ENCODE measurements at regions of chr14 and their contacts with region 1.

Region 1: DNA sequence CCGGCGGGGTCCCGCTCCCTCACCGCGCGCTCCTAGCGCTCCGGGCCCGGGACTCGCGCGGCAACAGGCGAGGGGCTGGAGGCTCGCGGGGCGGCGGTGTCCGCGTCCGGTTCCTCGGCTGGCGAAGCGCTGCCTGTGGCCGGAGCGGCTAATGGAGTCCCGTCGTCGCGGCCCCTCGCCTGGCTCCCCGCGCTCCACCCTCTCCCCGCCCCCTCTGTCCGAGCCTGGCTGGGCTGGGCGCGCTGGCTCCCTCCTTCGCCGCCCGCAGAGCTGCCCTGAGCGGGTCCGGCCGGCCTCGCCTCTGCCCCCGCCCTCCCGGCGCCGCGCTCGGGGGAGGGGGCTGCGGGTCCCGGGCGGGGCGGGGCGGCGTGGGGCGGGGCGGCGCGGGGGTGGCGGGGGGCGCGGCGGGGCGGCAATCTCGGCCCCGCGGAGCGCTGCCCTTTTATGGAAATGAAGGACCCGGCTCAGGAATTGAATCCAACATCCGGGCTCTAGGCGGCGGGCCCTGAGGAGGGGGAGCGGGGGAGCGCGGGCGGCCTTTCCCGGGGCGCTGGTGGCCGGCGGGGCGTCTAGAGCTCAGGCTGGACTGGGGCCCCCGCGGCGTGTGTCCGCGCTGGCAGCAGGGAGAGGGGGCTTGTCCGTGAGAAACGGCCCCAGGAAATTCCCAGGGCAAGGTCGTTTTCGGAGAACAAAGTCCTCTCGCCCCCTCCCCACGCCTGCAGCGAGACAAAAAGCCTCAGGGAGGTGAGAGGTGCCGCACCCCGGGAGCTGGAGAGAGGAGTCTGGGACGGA is at the start of gene FERMT2:
- DNase-seq: peak; percentile 86
- H3K4me3 ChIP-seq: peak within 1 kb of the TSS; percentile 65
- H3K27ac ChIP-seq: peak within 1 kb of the TSS; percentile 91
- H3K4me1 ChIP-seq: peaks cover 26% of the 10 kb centered on the region
- H3K27me3 ChIP-seq: no peaks in the 10 kb centered on the region
- CTCF ChIP-seq: no peak
- total RNA-seq, gene FERMT2: 38.3 and 48.0 TPM in 2 replicates

Region 2: GRCh38 chr14:52829527-52829926 is 121.6 kb before region 1 on chr14:
- CTCF ChIA-PET with region 1: no interaction called
- POLR2A ChIA-PET with region 1: no interaction called
- intact Hi-C with region 1: loop called (anchors 2 kb)
- DNase-seq: no peak
- H3K4me3 ChIP-seq: no peak overlapping the region
- H3K27ac ChIP-seq: no peak overlapping the region
- H3K4me1 ChIP-seq: peaks cover 32% of the 10 kb centered on the region
- H3K27me3 ChIP-seq: no peaks in the 10 kb centered on the region
- CTCF ChIP-seq: no peak

Measured in A673 (cell line).